K562 (cell line): ENCODE measurements at regions of chr1 and their contacts with region 1.

Region 1: DNA sequence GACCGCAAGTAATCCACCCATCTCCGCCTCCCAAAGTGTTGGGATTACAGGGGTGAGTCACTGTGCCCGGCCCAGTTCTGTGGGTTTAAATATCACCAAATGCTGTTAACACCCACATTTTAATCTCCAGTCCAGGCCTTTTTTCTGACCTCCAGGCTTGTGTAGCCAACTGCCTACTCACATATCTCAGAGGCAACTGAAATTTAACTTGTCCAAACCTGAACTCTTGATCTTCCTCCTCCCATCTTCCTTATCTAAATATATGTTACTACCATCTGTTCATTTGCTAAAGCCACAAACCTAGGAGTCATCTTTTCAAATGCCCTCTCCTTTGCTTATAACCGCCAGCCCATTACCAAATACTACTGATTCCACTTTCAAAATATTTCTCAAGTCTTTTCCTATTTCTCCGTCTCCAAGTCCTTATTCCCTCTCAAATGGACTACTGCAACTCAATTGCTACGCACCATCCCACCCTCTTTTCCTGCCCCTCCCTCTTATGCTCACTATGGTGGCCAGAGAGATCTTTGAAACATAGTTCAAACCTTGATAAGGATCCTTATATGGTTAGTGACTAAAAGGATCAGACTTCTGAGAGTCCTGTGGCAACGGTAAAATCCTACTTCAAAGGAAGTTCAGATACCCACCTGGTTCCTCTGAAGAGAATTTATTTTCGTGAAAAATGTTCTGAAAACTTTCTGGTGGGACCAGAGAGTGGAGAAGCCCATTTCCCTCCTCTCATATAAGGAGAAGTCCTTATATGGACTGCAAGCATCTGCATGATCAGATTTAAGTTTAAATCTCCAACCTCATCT is 78.5 kb upstream of the CDC42BPA start:
- DNase-seq: peak; percentile 86 to 97 (median 89)
- ATAC-seq: peak; percentile 93
- H3K4me3 ChIP-seq: peak overlapping the region; percentile 14; the same call in 1 of the 2 replicates
- H3K27ac ChIP-seq: peak overlapping the region; percentile 87
- H3K4me1 ChIP-seq: peaks cover 26 to 36% of the 10 kb centered on the region in 2 experiments
- H3K27me3 ChIP-seq: no peaks in the 10 kb centered on the region
- CTCF ChIP-seq: no peak; a peak in 1 of 6 replicates
- EP300 ChIP-seq: peak; percentile 99
- POLR2A ChIP-seq: no peak
- RAD21 ChIP-seq: peak; percentile 30 to 47; a peak in 3 of 4 replicates

Region 2: GRCh38 chr1:227225715-227226346 is 170.9 kb before region 1 on chr1:
- CTCF ChIA-PET with region 1: no interaction called
- POLR2A ChIA-PET with region 1: no interaction called
- in situ Hi-C with region 1: no loop called
- intact Hi-C with region 1: no loop called
- DNase-seq: peak in 1 of 4 experiments; percentile 54
- ATAC-seq: peak; percentile 67
- H3K4me3 ChIP-seq: no peak overlapping the region
- H3K27ac ChIP-seq: peak overlapping the region; percentile 48; the same call in 1 of the 3 replicates
- H3K4me1 ChIP-seq: peaks cover 0 to 27% of the 10 kb centered on the region in 2 experiments; a peak in 4 of 5 replicates
- H3K27me3 ChIP-seq: no peaks in the 10 kb centered on the region
- CTCF ChIP-seq: no peak
- EP300 ChIP-seq: no peak
- POLR2A ChIP-seq: no peak
- RAD21 ChIP-seq: no peak

Region 3: GRCh38 chr1:227330684-227331083 is 66.1 kb before region 1 on chr1:
- CTCF ChIA-PET with region 1: no interaction called
- POLR2A ChIA-PET with region 1: no interaction called
- in situ Hi-C with region 1: no loop called
- intact Hi-C with region 1: no loop called
- DNase-seq: no peak
- ATAC-seq: no peak
- H3K4me3 ChIP-seq: no peak overlapping the region
- H3K27ac ChIP-seq: no peak overlapping the region
- H3K4me1 ChIP-seq: peaks cover 4 to 16% of the 10 kb centered on the region in 2 experiments
- H3K27me3 ChIP-seq: no peaks in the 10 kb centered on the region
- CTCF ChIP-seq: no peak
- EP300 ChIP-seq: no peak
- POLR2A ChIP-seq: no peak
- RAD21 ChIP-seq: no peak

Region 4: GRCh38 chr1:227357171-227357880 is 39.4 kb before region 1 on chr1:
- CTCF ChIA-PET with region 1: no interaction called
- POLR2A ChIA-PET with region 1: interaction called, 12 read pairs
- in situ Hi-C with region 1: no loop called
- intact Hi-C with region 1: loop called (anchors 1 kb)
- DNase-seq: peak; percentile 85 to 96 (median 90)
- ATAC-seq: peak; percentile 97
- H3K4me3 ChIP-seq: peak overlapping the region; percentile 13; the same call in 1 of the 2 replicates
- H3K27ac ChIP-seq: peak overlapping the region; percentile 93
- H3K4me1 ChIP-seq: peaks cover 20 to 29% of the 10 kb centered on the region in 2 experiments
- H3K27me3 ChIP-seq: no peaks in the 10 kb centered on the region
- CTCF ChIP-seq: no peak; a peak in 1 of 6 replicates
- EP300 ChIP-seq: peak; percentile 91
- POLR2A ChIP-seq: peak; percentile 46
- RAD21 ChIP-seq: peak; percentile 15 to 44

Region 5: DNA sequence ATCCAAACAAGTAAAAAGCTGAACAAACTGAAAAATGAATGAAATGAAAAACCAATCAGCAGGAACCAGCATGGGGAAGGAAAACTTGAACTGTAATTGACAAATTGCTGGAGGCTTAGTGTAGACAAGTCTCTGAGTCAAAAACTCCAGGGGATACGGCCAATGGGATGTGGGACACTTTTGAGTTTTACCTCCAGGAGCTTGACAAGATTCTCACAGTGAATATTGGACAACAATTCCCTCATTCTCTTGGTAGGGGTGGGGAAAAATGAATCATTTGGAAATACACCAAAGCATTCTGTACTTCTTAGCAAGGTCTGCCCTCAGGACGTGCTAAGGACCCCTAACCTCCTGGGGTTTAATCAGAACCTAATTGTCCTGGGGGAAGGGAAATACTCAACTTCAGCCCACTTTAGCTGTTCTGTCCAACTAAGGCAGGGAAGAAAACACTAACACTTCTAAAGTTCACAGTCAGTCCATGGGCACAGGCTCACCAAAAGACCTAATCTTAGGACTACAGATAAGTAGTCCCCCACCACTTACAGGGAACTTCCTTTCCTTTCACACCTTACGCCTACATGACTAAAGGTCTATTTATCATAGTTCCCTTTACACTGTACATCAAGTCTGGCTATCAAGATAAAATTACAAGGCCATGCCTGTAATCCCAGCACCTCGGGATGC is 17.7 kb before region 1 on chr1:
- CTCF ChIA-PET with region 1: no interaction called
- POLR2A ChIA-PET with region 1: interaction called, 6 read pairs
- in situ Hi-C with region 1: no loop called
- intact Hi-C with region 1: loop called (anchors 1 kb)
- DNase-seq: peak in 2 of 4 experiments; percentile 73 to 76
- ATAC-seq: peak; percentile 87
- H3K4me3 ChIP-seq: no peak overlapping the region
- H3K27ac ChIP-seq: peak overlapping the region; percentile 46
- H3K4me1 ChIP-seq: peaks cover 3 to 12% of the 10 kb centered on the region in 2 experiments; a peak in 4 of 5 replicates
- H3K27me3 ChIP-seq: no peaks in the 10 kb centered on the region
- CTCF ChIP-seq: no peak
- EP300 ChIP-seq: peak; percentile 59; the same call in 1 of the 2 replicates
- POLR2A ChIP-seq: no peak
- RAD21 ChIP-seq: no peak

Region 6: GRCh38 chr1:227428803-227429202 is 32.1 kb after region 1 on chr1:
- CTCF ChIA-PET with region 1: no interaction called
- POLR2A ChIA-PET with region 1: no interaction called
- in situ Hi-C with region 1: no loop called
- intact Hi-C with region 1: loop called (anchors 2 kb)
- DNase-seq: no peak
- ATAC-seq: no peak
- H3K4me3 ChIP-seq: no peak overlapping the region
- H3K27ac ChIP-seq: no peak overlapping the region
- H3K4me1 ChIP-seq: peaks cover 22 to 34% of the 10 kb centered on the region in 2 experiments
- H3K27me3 ChIP-seq: no peaks in the 10 kb centered on the region
- CTCF ChIP-seq: no peak
- EP300 ChIP-seq: no peak
- POLR2A ChIP-seq: no peak
- RAD21 ChIP-seq: no peak

Region 7: GRCh38 chr1:227449051-227449450 is 52.3 kb after region 1 on chr1:
- CTCF ChIA-PET with region 1: no interaction called
- POLR2A ChIA-PET with region 1: no interaction called
- in situ Hi-C with region 1: no loop called
- intact Hi-C with region 1: no loop called
- DNase-seq: peak; percentile 70 to 81 (median 74)
- ATAC-seq: peak; percentile 88
- H3K4me3 ChIP-seq: no peak overlapping the region
- H3K27ac ChIP-seq: no peak overlapping the region
- H3K4me1 ChIP-seq: peaks cover 10 to 12% of the 10 kb centered on the region in 2 experiments; a peak in 4 of 5 replicates
- H3K27me3 ChIP-seq: peaks cover 5 to 13% of the 10 kb centered on the region in 2 experiments; a peak in 4 of 5 replicates
- CTCF ChIP-seq: peak; percentile 77 to 78 (median 77); a peak in 5 of 6 replicates
- EP300 ChIP-seq: no peak
- POLR2A ChIP-seq: no peak
- RAD21 ChIP-seq: peak; percentile 28 to 77

Region 8: DNA sequence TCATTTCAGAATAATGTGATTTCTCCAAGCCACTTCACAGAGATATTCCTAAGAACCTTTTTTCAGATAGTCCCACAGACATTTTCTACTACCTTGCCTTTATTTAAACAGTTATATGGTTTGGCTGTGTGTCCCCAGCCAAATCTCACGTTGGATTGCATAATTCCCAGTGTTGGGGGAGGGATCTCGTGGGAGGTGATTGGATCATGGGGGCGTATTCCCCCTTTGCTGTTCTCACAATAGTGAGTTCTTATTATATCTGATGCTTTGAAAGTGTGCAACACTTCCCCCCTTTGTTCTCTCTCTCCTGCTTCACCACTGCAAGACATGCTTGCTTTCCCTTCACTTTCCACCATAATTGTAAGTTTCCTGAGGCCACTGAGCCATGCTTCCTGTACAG is 73.0 kb after region 1 on chr1:
- CTCF ChIA-PET with region 1: no interaction called
- POLR2A ChIA-PET with region 1: no interaction called
- in situ Hi-C with region 1: no loop called
- intact Hi-C with region 1: no loop called
- DNase-seq: no peak
- ATAC-seq: no peak
- H3K4me3 ChIP-seq: no peak overlapping the region
- H3K27ac ChIP-seq: no peak overlapping the region
- H3K4me1 ChIP-seq: no peaks in the 10 kb centered on the region
- H3K27me3 ChIP-seq: peaks cover 4 to 21% of the 10 kb centered on the region in 2 experiments; a peak in 4 of 5 replicates
- CTCF ChIP-seq: no peak
- EP300 ChIP-seq: no peak
- POLR2A ChIP-seq: no peak
- RAD21 ChIP-seq: no peak